Breast epithelium (tissue), 4 donors: ENCODE measurements at regions of chr7 and their contacts with region 1.

Region 1: DNA sequence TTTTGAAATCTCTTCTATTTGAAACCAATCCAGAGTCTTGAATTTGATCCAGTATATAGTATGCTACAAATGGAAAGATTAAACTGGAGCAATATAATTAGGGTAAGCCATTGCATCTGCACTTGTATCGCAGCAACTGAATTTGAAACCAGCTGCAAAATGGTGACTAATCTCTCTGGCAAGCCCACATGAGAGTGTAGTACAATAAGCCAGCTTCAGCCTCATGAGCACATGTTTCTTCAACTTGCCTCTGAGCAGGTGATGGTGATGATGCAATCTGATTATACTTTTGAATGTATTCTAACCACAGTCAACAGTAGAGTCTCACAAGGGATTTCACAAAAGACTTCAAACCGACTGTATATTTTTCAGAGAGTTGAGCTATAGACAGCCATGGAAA is 829 bp upstream of the RPA3 start:
- DNase-seq: peak in 1 of 2 donors; percentile 37
- H3K4me3 ChIP-seq: no peak overlapping the region
- H3K27ac ChIP-seq: no peak overlapping the region
- H3K4me1 ChIP-seq: no peaks in the 10 kb centered on the region
- H3K27me3 ChIP-seq: no peaks in the 10 kb centered on the region
- CTCF ChIP-seq: no peak
- POLR2A ChIP-seq: no peak

Region 2: GRCh38 chr7:7959979-7960670 is 240.9 kb after region 1 on chr7:
- intact Hi-C with region 1: loop called (anchors 5 kb)
- DNase-seq: no peak
- H3K4me3 ChIP-seq: no peak overlapping the region
- H3K27ac ChIP-seq: no peak overlapping the region
- H3K4me1 ChIP-seq: no peaks in the 10 kb centered on the region
- H3K27me3 ChIP-seq: no peaks in the 10 kb centered on the region
- CTCF ChIP-seq: no peak
- POLR2A ChIP-seq: no peak